ENCODE measurements at regions of chr15 and their contacts with region 1.

Region 1: DNA sequence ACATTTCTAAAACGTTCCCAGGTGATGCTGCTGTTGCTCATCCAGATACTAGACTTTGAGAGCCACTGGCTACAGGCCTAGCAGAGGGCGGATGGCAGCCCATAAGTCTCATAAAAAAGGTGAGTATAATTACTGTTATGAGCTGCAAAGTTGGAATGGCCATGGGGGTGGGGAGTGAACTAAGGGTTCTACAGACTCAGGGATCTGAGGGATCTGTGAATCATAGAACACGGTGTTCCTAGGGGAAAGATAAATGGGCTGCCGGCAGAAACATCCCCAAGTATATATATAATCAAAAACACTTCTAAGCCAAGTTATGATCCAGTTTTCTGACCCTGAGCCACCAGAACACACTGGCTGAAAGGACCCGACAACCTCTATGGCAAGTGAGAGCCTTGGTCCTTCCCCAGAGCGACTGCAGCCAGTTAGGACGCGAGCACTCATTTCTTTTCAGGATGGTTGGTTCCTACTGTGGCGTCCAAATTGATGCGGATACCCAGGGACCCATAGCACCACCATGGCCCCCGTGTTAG is 7.9 kb upstream of the SYNM start:
- DNase-seq: no peak
- ATAC-seq: no peak
- H3K4me3 ChIP-seq: no peak overlapping the region
- H3K27ac ChIP-seq: no peak overlapping the region
- H3K4me1 ChIP-seq: peaks cover 11% of the 10 kb centered on the region
- H3K27me3 ChIP-seq: no peaks in the 10 kb centered on the region
- CTCF ChIP-seq: no peak
- POLR2A ChIP-seq: no peak

Region 2: GRCh38 chr15:99014803-99015676 is 81.9 kb before region 1 on chr15:
- intact Hi-C with region 1: no loop called
- DNase-seq: peak; percentile 84 to 89 (median 88)
- ATAC-seq: peak; percentile 97
- H3K4me3 ChIP-seq: peak overlapping the region; percentile 58 to 62
- H3K27ac ChIP-seq: peak overlapping the region; percentile 81 to 97 (median 92)
- H3K4me1 ChIP-seq: peaks cover 16% of the 10 kb centered on the region
- H3K27me3 ChIP-seq: no peaks in the 10 kb centered on the region
- CTCF ChIP-seq: peak in 1 of 7 experiments; percentile 9
- POLR2A ChIP-seq: peak; percentile 85 to 90 (median 86)

Region 3: GRCh38 chr15:99213187-99213811 is 116.3 kb after region 1 on chr15:
- intact Hi-C with region 1: loop called (anchors 5 kb)
- DNase-seq: peak; percentile 73 to 88 (median 80)
- ATAC-seq: peak; percentile 77
- H3K4me3 ChIP-seq: no peak overlapping the region
- H3K27ac ChIP-seq: no peak overlapping the region
- H3K4me1 ChIP-seq: no peaks in the 10 kb centered on the region
- H3K27me3 ChIP-seq: no peaks in the 10 kb centered on the region
- CTCF ChIP-seq: peak; percentile 57 to 86 (median 78)
- POLR2A ChIP-seq: no peak

Measured in body of pancreas (tissue), 4 donors.